IMR-90 (cell line): ENCODE measurements at regions of chr2 and their contacts with region 1.

Region 1: DNA sequence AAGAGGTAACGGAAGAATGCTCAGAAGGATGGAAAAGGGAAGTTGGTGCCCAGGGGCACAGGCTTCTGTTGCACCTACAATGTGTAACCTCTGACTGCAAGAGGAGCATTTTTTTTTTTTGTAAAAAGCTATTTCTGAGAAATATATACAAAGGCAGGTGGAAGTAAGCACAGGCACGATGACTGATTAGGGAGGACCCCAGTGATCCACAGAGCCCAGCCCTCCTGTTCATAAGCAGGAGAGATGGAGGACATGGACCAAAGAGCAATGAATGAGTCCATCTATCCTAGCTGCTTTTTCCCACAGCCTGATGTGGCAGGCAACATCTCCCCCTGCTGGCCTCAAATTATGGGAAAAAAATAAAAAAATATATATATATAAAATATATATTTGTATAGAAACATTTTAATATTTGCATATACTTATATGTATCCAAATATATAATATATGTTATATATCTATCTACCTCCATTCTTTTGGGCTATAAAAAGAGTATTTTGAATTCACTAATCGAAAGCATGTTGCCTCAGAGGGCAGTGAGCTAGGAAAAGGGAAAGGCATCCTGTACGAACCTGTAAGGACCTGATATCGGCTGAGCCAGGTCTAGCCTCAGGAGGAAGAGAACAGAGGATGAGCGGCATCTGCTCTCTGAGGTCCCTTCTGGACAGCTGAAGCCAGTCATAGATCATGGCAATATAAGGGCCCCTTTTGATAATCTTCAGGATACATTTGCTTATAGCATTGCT is 166.0 kb upstream of the STK17B start:
- DNase-seq: peak; percentile 58
- ATAC-seq: peak; percentile 25; the same call in 1 of the 2 replicates
- H3K4me3 ChIP-seq: no peak overlapping the region
- H3K27ac ChIP-seq: no peak overlapping the region
- H3K4me1 ChIP-seq: peaks cover 18% of the 10 kb centered on the region
- H3K27me3 ChIP-seq: no peaks in the 10 kb centered on the region
- CTCF ChIP-seq: peak; percentile 56
- POLR2A ChIP-seq: no peak
- RAD21 ChIP-seq: peak; percentile 83

Region 2: DNA sequence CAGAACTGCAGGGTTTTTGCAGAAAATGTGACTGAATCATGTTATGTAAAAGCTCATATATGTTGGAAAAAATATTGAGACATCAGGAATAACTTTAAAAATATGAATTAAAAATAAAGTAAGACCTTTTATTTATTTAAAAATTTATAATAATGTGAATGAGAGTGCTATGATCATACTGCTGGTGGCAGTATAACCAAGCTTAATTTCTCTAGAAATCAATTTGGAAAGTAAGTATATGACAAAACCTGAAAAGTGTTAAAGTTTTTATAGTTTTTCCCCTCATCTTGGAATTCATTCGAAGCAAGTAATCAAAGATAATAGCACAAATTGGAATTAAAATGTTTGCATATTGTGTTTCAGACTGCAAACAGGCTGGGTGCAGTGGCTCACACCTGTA is 672.9 kb before region 1 on chr2:
- CTCF ChIA-PET with region 1: no interaction called
- POLR2A ChIA-PET with region 1: no interaction called
- dilution Hi-C with region 1: no loop called
- in situ Hi-C with region 1: loop called (anchors 25 kb)
- intact Hi-C with region 1: loop called (anchors 5 kb)
- DNase-seq: peak; percentile 41
- ATAC-seq: no peak
- H3K4me3 ChIP-seq: no peak overlapping the region
- H3K27ac ChIP-seq: no peak overlapping the region
- H3K4me1 ChIP-seq: peaks cover 8% of the 10 kb centered on the region
- H3K27me3 ChIP-seq: no peaks in the 10 kb centered on the region
- CTCF ChIP-seq: peak; percentile 57
- POLR2A ChIP-seq: no peak
- RAD21 ChIP-seq: peak; percentile 59

Region 3: DNA sequence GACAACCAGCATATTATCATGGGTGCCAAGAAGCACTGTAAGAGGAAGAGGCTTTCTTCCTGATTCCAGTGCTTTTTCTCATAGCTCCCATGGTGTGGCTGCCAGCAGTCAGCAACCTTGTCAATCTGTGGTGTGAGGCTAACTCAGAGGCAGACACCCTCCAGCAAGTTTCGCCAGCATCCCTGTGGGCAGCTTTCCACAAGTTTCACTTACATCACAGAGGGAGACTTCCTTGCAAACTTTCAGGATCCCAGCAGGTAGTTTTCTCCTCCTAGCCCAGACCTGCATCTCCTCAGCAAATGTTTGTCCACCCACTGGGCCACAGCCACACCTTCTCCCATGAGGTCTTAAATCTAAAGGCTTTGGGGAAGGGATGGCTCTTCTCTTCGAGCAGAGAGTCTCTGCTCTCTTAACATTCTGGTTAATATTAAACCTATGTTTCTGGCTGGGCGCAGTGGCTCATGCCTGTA is 277.9 kb before region 1 on chr2:
- CTCF ChIA-PET with region 1: no interaction called
- POLR2A ChIA-PET with region 1: no interaction called
- dilution Hi-C with region 1: no loop called
- in situ Hi-C with region 1: no loop called
- intact Hi-C with region 1: no loop called
- DNase-seq: no peak
- ATAC-seq: no peak
- H3K4me3 ChIP-seq: no peak overlapping the region
- H3K27ac ChIP-seq: no peak overlapping the region
- H3K4me1 ChIP-seq: no peaks in the 10 kb centered on the region
- H3K27me3 ChIP-seq: no peaks in the 10 kb centered on the region
- CTCF ChIP-seq: no peak
- POLR2A ChIP-seq: no peak
- RAD21 ChIP-seq: no peak

Region 4: DNA sequence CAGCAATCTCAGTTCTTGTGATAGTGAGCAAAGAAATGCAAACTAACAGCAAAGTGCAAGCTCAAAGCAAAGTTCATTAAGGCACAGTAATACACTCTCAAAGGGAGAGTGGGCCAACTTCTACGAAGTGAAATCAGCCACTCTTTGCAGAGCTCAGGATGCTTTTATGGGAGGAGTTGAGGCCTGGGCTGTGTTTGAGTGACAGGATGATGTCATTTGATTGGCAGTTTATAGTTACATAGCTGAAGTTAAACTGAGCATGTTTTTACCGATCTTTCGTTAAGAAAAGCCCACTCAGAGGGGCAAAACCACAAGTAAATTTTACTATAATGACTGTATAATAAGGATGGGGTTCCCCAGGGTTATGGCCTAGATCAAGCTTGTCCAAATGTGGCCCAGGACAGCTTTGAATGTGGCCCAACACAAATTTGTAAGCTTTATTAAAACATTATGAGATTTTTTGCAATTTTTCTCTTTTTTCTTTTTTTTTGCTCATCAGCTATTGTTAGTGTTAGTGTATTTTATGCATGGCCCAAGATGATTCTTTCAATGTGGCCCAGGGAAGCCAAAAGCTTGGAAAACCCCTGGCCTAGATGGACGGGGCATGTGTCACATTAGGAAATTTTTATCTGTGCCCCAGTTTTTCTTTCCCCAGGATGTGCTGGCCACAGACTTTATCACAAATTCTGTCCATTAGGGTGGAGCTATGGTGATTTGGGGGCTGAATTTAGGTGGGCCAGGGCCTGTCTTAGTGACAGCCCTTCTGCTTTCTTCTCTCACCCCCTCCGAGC is 260.4 kb before region 1 on chr2:
- CTCF ChIA-PET with region 1: interaction called, 28 read pairs
- POLR2A ChIA-PET with region 1: no interaction called
- dilution Hi-C with region 1: no loop called
- in situ Hi-C with region 1: loop called (anchors 5 kb)
- intact Hi-C with region 1: loop called (anchors 1 kb)
- DNase-seq: no peak
- ATAC-seq: no peak
- H3K4me3 ChIP-seq: no peak overlapping the region
- H3K27ac ChIP-seq: peak overlapping the region; percentile 5; the same call in 1 of the 2 replicates
- H3K4me1 ChIP-seq: peaks cover 6% of the 10 kb centered on the region
- H3K27me3 ChIP-seq: no peaks in the 10 kb centered on the region
- CTCF ChIP-seq: no peak
- POLR2A ChIP-seq: no peak
- RAD21 ChIP-seq: no peak

Region 5: GRCh38 chr2:196171248-196171871 is 166.0 kb before region 1 on chr2 and contains the start of gene STK17B:
- CTCF ChIA-PET with region 1: interaction called, 5 read pairs
- POLR2A ChIA-PET with region 1: no interaction called
- dilution Hi-C with region 1: no loop called
- in situ Hi-C with region 1: loop called (anchors 10 kb)
- intact Hi-C with region 1: loop called (anchors 1 kb)
- DNase-seq: peak; percentile 91
- ATAC-seq: peak; percentile 91
- H3K4me3 ChIP-seq: peak within 1 kb of the TSS; percentile 67
- H3K27ac ChIP-seq: peak within 1 kb of the TSS; percentile 67
- H3K4me1 ChIP-seq: peaks cover 2% of the 10 kb centered on the region
- H3K27me3 ChIP-seq: no peaks in the 10 kb centered on the region
- CTCF ChIP-seq: no peak
- POLR2A ChIP-seq: peak; percentile 97
- RAD21 ChIP-seq: peak; percentile 15; the same call in 1 of the 2 replicates
- total RNA-seq, gene STK17B: 48.9 and 50.3 TPM in 2 replicates

Region 6: DNA sequence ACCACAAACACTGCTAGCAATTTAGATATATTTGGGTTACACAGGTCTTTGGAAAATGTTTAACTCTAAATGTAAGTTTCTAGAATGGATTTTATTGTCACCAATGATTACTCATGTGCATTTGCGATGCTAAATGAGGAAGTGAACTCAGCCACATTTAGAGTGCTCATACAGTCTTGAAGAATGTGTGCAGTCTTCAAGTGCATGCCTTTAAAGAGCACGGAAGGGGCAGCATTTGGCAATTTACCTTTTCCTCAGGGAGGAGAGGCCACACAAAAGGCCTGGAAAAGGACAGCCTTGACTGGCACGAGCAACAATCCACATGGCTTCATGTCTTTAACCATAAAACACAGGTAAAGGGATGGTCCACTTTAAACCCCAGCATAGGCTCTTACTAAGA is 87.5 kb before region 1 on chr2:
- CTCF ChIA-PET with region 1: no interaction called
- POLR2A ChIA-PET with region 1: no interaction called
- dilution Hi-C with region 1: no loop called
- in situ Hi-C with region 1: no loop called
- intact Hi-C with region 1: no loop called
- DNase-seq: peak; percentile 68
- ATAC-seq: peak; percentile 53
- H3K4me3 ChIP-seq: no peak overlapping the region
- H3K27ac ChIP-seq: peak overlapping the region; percentile 4; the same call in 1 of the 2 replicates
- H3K4me1 ChIP-seq: peaks cover 11% of the 10 kb centered on the region
- H3K27me3 ChIP-seq: no peaks in the 10 kb centered on the region
- CTCF ChIP-seq: no peak
- POLR2A ChIP-seq: no peak
- RAD21 ChIP-seq: no peak

Region 7: GRCh38 chr2:196291873-196292800 is 45.2 kb before region 1 on chr2:
- CTCF ChIA-PET with region 1: interaction called, 5 read pairs
- POLR2A ChIA-PET with region 1: no interaction called
- dilution Hi-C with region 1: no loop called
- in situ Hi-C with region 1: loop called (anchors 5 kb)
- intact Hi-C with region 1: no loop called
- DNase-seq: no peak
- ATAC-seq: no peak
- H3K4me3 ChIP-seq: no peak overlapping the region
- H3K27ac ChIP-seq: no peak overlapping the region
- H3K4me1 ChIP-seq: peaks cover 11% of the 10 kb centered on the region
- H3K27me3 ChIP-seq: no peaks in the 10 kb centered on the region
- CTCF ChIP-seq: no peak
- POLR2A ChIP-seq: no peak
- RAD21 ChIP-seq: no peak

Region 8: GRCh38 chr2:196453613-196454047 is 116.2 kb after region 1 on chr2:
- CTCF ChIA-PET with region 1: interaction called, 15 read pairs
- POLR2A ChIA-PET with region 1: no interaction called
- dilution Hi-C with region 1: no loop called
- in situ Hi-C with region 1: no loop called
- intact Hi-C with region 1: loop called (anchors 1 kb)
- DNase-seq: peak; percentile 63
- ATAC-seq: peak; percentile 73; the same call in 1 of the 2 replicates
- H3K4me3 ChIP-seq: no peak overlapping the region
- H3K27ac ChIP-seq: no peak overlapping the region
- H3K4me1 ChIP-seq: no peaks in the 10 kb centered on the region
- H3K27me3 ChIP-seq: no peaks in the 10 kb centered on the region
- CTCF ChIP-seq: peak; percentile 69
- POLR2A ChIP-seq: no peak
- RAD21 ChIP-seq: peak; percentile 73

Region 9: GRCh38 chr2:197472166-197472565 is 1134.8 kb after region 1 on chr2:
- CTCF ChIA-PET with region 1: no interaction called
- POLR2A ChIA-PET with region 1: no interaction called
- dilution Hi-C with region 1: no loop called
- in situ Hi-C with region 1: no loop called
- intact Hi-C with region 1: no loop called
- DNase-seq: no peak
- ATAC-seq: no peak
- H3K4me3 ChIP-seq: no peak overlapping the region
- H3K27ac ChIP-seq: no peak overlapping the region
- H3K4me1 ChIP-seq: no peaks in the 10 kb centered on the region
- H3K27me3 ChIP-seq: no peaks in the 10 kb centered on the region
- CTCF ChIP-seq: no peak
- POLR2A ChIP-seq: no peak
- RAD21 ChIP-seq: no peak